Activated CD4-positive, alpha-beta T cell treated with anti-CD3 and anti-CD28 coated beads, Interleukin-2, amount 10 ng/mL, durations not matched to agents 24 days and 14 days (primary cell): ENCODE measurements at regions of chr5 and their contacts with region 1.

Region 1: GRCh38 chr5:142888469-142889085 is 118.4 kb downstream of the ARHGAP26 start:
- DNase-seq: peak; percentile 69
- H3K4me3 Mint-ChIP-seq: no peak overlapping the region
- H3K27ac Mint-ChIP-seq: no peak overlapping the region
- H3K4me1 Mint-ChIP-seq: peaks cover 7% of the 10 kb centered on the region
- H3K27me3 Mint-ChIP-seq: no peaks in the 10 kb centered on the region

Region 2: GRCh38 chr5:142611154-142611553 is 277.4 kb before region 1 on chr5:
- intact Hi-C with region 1: loop called (anchors 10 kb)
- DNase-seq: peak; percentile 90
- H3K4me3 Mint-ChIP-seq: no peak overlapping the region
- H3K27ac Mint-ChIP-seq: no peak overlapping the region
- H3K4me1 Mint-ChIP-seq: peaks cover 2% of the 10 kb centered on the region
- H3K27me3 Mint-ChIP-seq: peaks cover 30% of the 10 kb centered on the region

Region 3: GRCh38 chr5:142655339-142656267 is 233.0 kb before region 1 on chr5:
- intact Hi-C with region 1: loop called (anchors 2 kb)
- DNase-seq: peak; percentile 90
- H3K4me3 Mint-ChIP-seq: no peak overlapping the region
- H3K27ac Mint-ChIP-seq: no peak overlapping the region
- H3K4me1 Mint-ChIP-seq: no peaks in the 10 kb centered on the region
- H3K27me3 Mint-ChIP-seq: peaks cover 25% of the 10 kb centered on the region

Region 4: DNA sequence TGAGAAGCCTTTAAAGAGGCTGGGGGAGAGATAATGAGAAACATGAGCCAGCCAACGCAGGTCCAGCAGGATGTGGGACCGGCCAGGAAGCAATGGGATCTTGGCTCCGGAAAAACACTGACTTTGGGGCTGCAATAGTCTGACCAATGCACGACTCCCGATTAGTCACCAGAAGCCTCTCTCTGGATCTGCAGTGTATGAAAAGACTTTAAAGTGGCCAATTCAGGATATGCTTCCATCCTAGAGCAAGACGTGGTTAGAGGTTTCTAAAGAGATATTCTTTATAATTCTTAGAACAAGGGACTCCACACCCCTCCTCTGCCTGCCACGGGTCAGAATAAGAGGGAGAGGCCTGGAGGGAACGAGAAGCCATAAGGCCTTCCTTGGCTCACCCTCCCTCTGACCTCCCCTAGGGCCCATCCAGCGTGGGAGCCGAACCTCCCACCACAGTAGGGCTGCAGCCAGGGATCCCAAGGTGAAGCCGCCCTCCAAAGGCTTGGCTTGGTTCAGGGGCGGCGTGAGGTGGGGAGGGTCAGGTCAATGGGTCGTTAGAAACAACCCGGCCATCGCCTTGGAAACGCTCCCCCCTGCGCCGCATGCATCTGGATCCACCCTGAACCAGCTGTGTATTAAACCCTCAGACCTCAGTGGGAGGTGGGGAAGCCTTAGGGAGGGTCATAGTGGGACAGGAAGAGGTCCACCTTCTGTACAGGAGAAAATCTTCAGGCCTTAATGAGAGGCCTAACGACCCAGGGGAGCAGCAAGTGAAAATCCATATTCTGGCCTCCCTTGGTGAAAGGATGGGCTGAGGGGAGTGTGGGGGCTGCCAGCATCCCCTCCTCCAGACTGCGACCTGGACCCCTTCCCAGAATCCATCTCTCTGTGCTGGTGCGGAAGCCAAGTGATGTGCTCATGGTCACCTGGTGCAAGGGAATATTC is 213.8 kb before region 1 on chr5:
- intact Hi-C with region 1: no loop called
- DNase-seq: no peak
- H3K4me3 Mint-ChIP-seq: no peak overlapping the region
- H3K27ac Mint-ChIP-seq: no peak overlapping the region
- H3K4me1 Mint-ChIP-seq: no peaks in the 10 kb centered on the region
- H3K27me3 Mint-ChIP-seq: peaks cover 9% of the 10 kb centered on the region

Region 5: DNA sequence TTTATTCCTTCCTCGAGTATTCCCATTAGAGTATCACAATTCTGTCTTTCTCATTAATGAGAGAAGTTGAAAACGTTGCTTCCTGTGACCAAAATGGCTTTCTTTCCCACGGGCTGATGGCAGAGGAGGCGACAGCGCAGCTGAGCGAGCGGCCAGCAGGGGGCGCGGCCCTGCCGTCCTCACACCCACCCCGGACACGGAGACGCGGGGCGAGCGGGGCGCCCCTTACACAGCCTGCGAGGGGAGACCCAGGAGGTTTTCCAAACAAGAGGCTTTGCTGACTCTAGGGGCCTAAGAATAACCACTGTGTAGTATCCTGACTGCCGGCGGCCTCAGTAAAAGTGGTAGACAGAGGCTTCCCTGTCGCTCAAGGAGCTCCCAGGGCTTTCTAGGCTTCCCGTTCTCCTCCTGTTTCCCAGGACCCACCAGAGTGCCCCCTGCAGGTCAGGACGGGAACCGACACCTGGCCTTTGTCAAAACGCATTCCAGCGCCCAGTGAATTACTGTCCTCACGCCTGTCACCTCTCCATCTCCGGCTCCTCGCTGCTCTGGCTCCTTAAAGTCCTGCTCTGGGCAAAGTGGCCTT is 175.4 kb before region 1 on chr5:
- intact Hi-C with region 1: loop called (anchors 2 kb)
- DNase-seq: peak; percentile 95
- H3K4me3 Mint-ChIP-seq: peak overlapping the region; percentile 80
- H3K27ac Mint-ChIP-seq: no peak overlapping the region
- H3K4me1 Mint-ChIP-seq: peaks cover 4% of the 10 kb centered on the region
- H3K27me3 Mint-ChIP-seq: peaks cover 30% of the 10 kb centered on the region

Region 6: GRCh38 chr5:142748568-142749249 is 139.9 kb before region 1 on chr5:
- intact Hi-C with region 1: loop called (anchors 1 kb)
- DNase-seq: peak; percentile 83
- H3K4me3 Mint-ChIP-seq: no peak overlapping the region
- H3K27ac Mint-ChIP-seq: no peak overlapping the region
- H3K4me1 Mint-ChIP-seq: peaks cover 12% of the 10 kb centered on the region
- H3K27me3 Mint-ChIP-seq: peaks cover 5% of the 10 kb centered on the region

Region 7: DNA sequence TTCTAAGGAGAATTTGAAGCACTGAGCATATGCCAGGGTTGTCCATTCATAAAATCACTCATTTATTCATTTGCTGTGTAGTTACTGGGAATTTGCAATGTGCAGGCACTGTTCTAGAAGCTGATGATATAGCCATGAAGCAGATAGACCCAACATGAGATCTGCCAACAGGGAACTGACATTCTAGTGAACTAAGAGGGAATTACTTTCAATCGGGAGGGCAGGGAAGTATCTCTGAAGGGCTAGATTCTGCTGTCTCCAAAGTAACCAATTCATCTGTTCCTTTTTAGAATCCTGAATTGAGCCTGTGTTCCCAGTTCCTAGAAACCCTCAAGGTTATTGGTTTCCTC is 129.8 kb before region 1 on chr5:
- intact Hi-C with region 1: no loop called
- DNase-seq: no peak
- H3K4me3 Mint-ChIP-seq: no peak overlapping the region
- H3K27ac Mint-ChIP-seq: peak overlapping the region; percentile 12
- H3K4me1 Mint-ChIP-seq: peaks cover 13% of the 10 kb centered on the region
- H3K27me3 Mint-ChIP-seq: peaks cover 13% of the 10 kb centered on the region

Region 8: DNA sequence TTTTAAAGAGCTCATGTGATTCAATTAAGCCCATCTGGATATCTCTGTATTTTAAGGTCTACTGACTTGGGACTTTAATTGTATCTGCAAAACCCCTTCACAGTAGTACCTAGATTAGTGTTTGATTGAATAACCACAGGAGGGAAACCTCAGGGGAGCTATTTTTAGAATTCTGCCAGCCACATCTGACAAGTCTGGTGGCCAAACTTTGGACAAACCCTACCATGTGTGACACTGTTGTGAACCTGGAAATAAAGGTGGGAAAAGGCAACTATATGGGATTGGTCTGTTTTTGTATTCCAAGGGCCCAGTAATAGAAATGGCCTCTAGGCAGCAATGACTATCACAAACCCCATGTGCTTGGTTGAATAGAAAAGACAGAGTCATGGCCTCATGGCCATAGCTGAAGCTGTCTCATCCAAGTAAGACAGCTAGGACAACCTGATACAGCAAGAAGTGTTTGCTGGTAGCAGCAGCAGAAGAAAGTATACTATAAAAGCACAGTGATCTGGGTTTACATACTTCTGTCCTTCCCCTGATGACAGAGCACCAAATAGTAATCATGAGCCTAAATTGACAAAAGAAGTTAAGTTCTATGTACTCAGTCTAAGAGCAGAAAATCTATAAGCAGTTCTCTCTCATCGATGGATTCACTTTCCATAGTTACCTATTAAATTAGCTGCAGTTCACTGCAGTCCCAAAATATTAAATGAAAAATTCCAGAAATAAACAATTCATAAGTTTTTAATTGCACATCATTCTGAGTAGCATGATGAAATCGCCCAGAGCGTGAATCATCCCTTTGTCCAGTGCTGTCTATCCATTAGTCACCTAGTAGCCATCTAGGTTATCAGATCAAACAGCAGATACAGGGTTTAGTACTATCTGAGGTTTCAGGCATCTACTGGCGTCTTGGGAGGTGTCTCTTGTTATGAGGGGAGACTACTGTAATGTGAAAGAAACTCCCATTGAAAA is 71.4 kb after region 1 on chr5:
- intact Hi-C with region 1: no loop called
- DNase-seq: no peak
- H3K4me3 Mint-ChIP-seq: no peak overlapping the region
- H3K27ac Mint-ChIP-seq: no peak overlapping the region
- H3K4me1 Mint-ChIP-seq: peaks cover 10% of the 10 kb centered on the region
- H3K27me3 Mint-ChIP-seq: no peaks in the 10 kb centered on the region

Region 9: DNA sequence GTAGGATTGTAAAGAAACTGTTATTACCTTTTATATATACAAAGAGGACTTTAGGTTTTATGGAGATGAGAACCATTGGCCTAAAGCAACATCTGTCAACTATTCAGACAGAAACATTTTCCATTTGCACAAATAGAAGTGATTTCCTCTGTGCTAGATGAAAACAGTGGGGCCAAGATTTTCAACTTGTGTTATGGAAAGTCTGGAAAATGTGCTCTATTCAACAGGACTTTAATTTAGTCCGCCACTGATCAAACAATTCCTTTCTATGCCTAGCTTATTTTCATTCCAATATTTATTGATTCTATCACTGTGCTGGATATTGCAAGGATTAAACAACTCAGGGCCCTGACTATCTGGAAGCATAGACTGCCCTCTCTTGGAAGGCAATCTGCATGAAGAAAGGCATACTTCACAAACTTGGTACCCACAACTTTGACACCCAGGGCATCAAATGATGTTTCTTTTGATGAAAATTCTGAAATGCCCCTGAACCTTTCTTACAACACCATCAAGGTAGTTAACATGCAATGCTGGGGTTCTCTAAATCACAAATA is 796.7 kb after region 1 on chr5:
- intact Hi-C with region 1: no loop called
- DNase-seq: no peak
- H3K4me3 Mint-ChIP-seq: no peak overlapping the region
- H3K27ac Mint-ChIP-seq: no peak overlapping the region
- H3K4me1 Mint-ChIP-seq: no peaks in the 10 kb centered on the region
- H3K27me3 Mint-ChIP-seq: peaks cover 5% of the 10 kb centered on the region